ENCODE measurements at regions of chr5 and their contacts with region 1.

Region 1: DNA sequence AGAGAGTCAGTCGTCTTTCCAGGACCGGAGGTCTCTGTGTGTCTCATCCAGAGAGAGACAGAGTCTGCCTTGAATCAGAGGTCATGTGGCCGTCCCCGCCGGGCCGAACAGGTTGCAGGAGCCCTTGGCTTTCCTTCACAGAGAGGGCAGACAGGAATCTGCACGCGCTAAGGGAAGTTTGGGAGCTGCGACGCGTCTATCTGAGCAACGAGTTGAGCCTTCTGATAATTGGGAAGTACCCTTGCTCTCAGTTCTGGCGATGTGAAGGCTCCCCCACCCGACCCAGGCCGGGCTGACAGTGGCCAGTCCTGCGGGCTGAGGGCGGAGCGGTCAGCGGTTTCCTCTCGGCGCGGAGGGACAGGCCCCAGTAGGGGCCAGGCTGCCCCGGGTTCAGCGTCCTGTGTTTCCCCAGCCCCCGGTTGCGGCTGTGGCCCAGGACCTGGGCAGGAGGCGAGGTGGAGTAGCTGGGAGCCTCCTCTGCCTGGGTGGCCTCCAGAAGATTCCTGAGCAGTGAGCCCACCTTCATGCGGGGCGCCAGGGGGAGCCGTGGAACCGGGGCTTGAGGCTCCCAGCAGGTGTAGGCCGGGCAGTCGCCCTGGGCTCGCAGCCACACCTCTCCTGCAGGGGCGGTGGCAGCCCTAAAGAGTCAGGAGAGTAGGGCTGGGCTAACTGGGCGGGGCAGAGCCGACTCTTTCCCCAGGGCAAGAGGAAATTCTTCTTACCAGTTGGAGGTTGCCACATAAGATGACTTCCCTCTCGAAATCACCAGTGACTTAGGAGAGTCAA is 13.8 kb downstream of the NR2F1 start:
- DNase-seq: no peak
- H3K4me3 ChIP-seq: no peak overlapping the region
- H3K27ac ChIP-seq: peak overlapping the region; percentile 24 to 60
- H3K4me1 ChIP-seq: no peaks in the 10 kb centered on the region
- H3K27me3 ChIP-seq: peaks cover 28% of the 10 kb centered on the region
- CTCF ChIP-seq: no peak
- POLR2A ChIP-seq: no peak

Region 2: DNA sequence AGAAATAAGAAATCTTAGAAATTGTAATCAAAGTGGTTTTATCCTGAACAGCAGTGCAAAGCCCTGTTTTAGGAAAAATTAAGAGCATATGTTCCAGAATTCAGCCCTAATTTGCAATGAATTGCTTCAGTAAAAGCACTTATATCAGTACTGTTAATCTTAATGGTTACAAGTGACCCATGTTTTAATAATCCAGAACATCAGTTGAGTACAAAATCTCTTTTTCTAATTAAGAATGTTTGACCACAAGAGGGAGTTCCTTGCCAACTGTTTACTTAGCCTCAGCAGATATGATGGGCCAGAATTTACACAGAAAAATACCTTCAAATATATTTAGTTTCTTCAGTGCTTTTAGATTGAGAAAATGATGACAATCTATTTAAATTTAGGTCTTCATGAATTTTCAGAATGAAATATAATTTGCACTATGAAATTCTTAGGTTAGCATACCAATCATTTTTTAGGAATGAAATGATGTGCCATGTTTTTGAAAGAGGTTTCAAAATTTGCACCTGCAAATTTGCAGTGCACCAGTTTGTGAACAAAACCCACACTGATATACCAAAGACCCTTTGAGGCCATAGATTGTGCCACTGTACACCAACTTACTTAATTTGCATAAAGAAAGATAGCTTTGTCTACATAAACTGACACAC is 1287.4 kb before region 1 on chr5:
- intact Hi-C with region 1: loop called (anchors 10 kb)
- DNase-seq: no peak
- H3K4me3 ChIP-seq: no peak overlapping the region
- H3K27ac ChIP-seq: no peak overlapping the region
- H3K4me1 ChIP-seq: no peaks in the 10 kb centered on the region
- H3K27me3 ChIP-seq: no peaks in the 10 kb centered on the region
- CTCF ChIP-seq: peak in 3 of 4 experiments; percentile 23 to 56 (median 50)
- POLR2A ChIP-seq: no peak